ENCODE measurements at regions of chr2 and their contacts with region 1.

Region 1: DNA sequence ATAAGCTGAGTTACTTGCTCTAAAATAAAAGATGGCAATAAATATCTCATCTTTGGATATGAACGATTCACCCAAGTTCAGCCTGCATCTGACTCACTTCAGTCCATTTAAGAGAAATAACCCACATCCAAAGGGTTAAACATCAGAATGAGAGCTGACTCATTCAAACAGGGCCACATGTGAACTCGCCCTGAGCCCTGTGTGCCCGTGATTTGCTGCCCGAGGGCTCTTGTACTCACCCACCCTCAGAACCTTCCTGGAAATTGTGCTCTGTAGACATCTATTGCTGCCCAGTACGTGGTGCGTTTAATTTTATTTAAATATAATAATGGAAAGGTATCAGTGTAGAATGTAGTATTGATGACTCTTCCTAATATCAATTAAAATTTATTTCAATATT is 66.9 kb upstream of the RBM44 start:
- DNase-seq: no peak
- H3K4me3 ChIP-seq: peak overlapping the region; percentile 52
- H3K27ac ChIP-seq: peak overlapping the region; percentile 92
- H3K4me1 ChIP-seq: peaks cover 99% of the 10 kb centered on the region
- H3K27me3 ChIP-seq: no peaks in the 10 kb centered on the region
- CTCF ChIP-seq: no peak

Region 2: GRCh38 chr2:237695201-237695780 is 36.4 kb before region 1 on chr2:
- intact Hi-C with region 1: loop called (anchors 5 kb)
- DNase-seq: no peak
- H3K4me3 ChIP-seq: peak overlapping the region; percentile 94
- H3K27ac ChIP-seq: peak overlapping the region; percentile 94
- H3K4me1 ChIP-seq: peaks cover 95% of the 10 kb centered on the region
- H3K27me3 ChIP-seq: no peaks in the 10 kb centered on the region
- CTCF ChIP-seq: no peak